ENCODE measurements at regions of chr18 and their contacts with region 1.

Region 1: GRCh38 chr18:24726727-24727492 is 266.5 kb downstream of the HRH4 start:
- DNase-seq: peak; percentile 48 to 77 (median 74)
- H3K4me3 ChIP-seq: no peak overlapping the region
- H3K27ac ChIP-seq: no peak overlapping the region
- H3K4me1 ChIP-seq: no peaks in the 10 kb centered on the region
- H3K27me3 ChIP-seq: no peaks in the 10 kb centered on the region
- CTCF ChIP-seq: peak; percentile 48 to 69 (median 50)
- EP300 ChIP-seq: no peak
- POLR2A ChIP-seq: no peak

Region 2: GRCh38 chr18:24543805-24544498 is 183.0 kb before region 1 on chr18:
- intact Hi-C with region 1: loop called in 3 of 4 experiments (anchors 5 kb)
- DNase-seq: no peak
- H3K4me3 ChIP-seq: no peak overlapping the region
- H3K27ac ChIP-seq: no peak overlapping the region
- H3K4me1 ChIP-seq: no peaks in the 10 kb centered on the region
- H3K27me3 ChIP-seq: no peaks in the 10 kb centered on the region
- CTCF ChIP-seq: peak in 1 of 3 donors; percentile 9
- EP300 ChIP-seq: no peak
- POLR2A ChIP-seq: no peak

Region 3: GRCh38 chr18:24600076-24600654 is 126.7 kb before region 1 on chr18:
- intact Hi-C with region 1: loop called in 3 of 4 experiments (anchors 5 kb)
- DNase-seq: peak in 1 of 5 donors; percentile 29
- H3K4me3 ChIP-seq: no peak overlapping the region
- H3K27ac ChIP-seq: no peak overlapping the region
- H3K4me1 ChIP-seq: no peaks in the 10 kb centered on the region
- H3K27me3 ChIP-seq: no peaks in the 10 kb centered on the region
- CTCF ChIP-seq: peak in 2 of 3 donors; percentile 22 to 26
- EP300 ChIP-seq: no peak
- POLR2A ChIP-seq: no peak

Region 4: GRCh38 chr18:24868760-24869237 is 141.9 kb after region 1 on chr18:
- intact Hi-C with region 1: no loop called
- DNase-seq: no peak
- H3K4me3 ChIP-seq: no peak overlapping the region
- H3K27ac ChIP-seq: no peak overlapping the region
- H3K4me1 ChIP-seq: no peaks in the 10 kb centered on the region
- H3K27me3 ChIP-seq: no peaks in the 10 kb centered on the region
- CTCF ChIP-seq: no peak
- EP300 ChIP-seq: no peak
- POLR2A ChIP-seq: no peak